Colonic mucosa (tissue), 4 donors: ENCODE measurements at regions of chr5 and their contacts with region 1.

Region 1: GRCh38 chr5:131382407-131383395 is 118.8 kb downstream of the CDC42SE2 start:
- DNase-seq: peak; percentile 40
- H3K4me3 ChIP-seq: no peak overlapping the region
- H3K27ac ChIP-seq: peak overlapping the region; percentile 63
- H3K4me1 ChIP-seq: peaks cover 11% of the 10 kb centered on the region
- H3K27me3 ChIP-seq: no peaks in the 10 kb centered on the region
- CTCF ChIP-seq: peak; percentile 42

Region 2: GRCh38 chr5:131165119-131165727 is 217.5 kb before region 1 on chr5 and contains the start of gene HINT1:
- intact Hi-C with region 1: loop called (anchors 10 kb)
- DNase-seq: peak; percentile 95
- H3K4me3 ChIP-seq: peak within 1 kb of the TSS; percentile 71
- H3K27ac ChIP-seq: peak within 1 kb of the TSS; percentile 99
- H3K4me1 ChIP-seq: no peaks in the 10 kb centered on the region
- H3K27me3 ChIP-seq: no peaks in the 10 kb centered on the region
- CTCF ChIP-seq: no peak
- total RNA-seq, gene HINT1: 269 to 288 TPM

Region 3: GRCh38 chr5:131263648-131264450 is 118.9 kb before region 1 on chr5 and contains the start of gene CDC42SE2:
- intact Hi-C with region 1: loop called (anchors 10 kb)
- DNase-seq: peak; percentile 86
- H3K4me3 ChIP-seq: peak within 1 kb of the TSS; percentile 91
- H3K27ac ChIP-seq: peak within 1 kb of the TSS; percentile 96
- H3K4me1 ChIP-seq: no peaks in the 10 kb centered on the region
- H3K27me3 ChIP-seq: no peaks in the 10 kb centered on the region
- CTCF ChIP-seq: no peak
- total RNA-seq, gene CDC42SE2: 74.2 to 110 TPM

Region 4: DNA sequence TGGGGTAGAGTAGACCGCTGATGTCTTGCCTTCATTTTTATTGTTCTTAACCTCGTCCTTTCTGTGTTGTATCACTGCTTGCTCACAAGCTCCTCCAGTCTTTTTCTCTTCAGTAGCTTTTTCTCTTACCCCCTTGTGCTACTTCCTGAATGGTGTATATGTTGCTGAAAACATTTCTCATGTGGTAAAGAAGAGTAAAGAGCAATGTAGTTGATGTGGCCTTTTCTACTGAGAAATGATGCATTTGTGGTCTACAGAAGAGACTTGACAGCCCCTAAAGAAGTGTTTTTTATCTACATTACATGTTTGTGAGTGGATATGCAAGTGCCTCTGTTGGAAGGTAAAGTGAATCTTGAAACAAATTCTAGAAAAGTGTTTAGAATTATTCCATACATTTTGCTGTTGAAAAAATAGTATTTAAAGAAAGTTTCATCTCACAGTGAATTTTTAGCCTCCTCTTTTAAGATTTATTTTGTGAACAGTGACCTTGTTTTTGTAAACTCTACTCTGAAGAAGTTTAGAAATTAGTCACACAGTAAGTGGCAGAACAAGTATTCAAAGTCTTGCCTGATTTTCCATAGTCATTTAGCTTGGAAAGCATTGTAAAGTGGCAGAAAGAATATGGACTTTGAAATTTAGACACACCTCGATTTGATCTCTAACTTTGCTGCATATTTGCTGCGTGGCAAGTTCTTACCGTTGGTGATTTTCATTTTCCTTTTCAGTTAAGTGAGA is 101.4 kb before region 1 on chr5:
- intact Hi-C with region 1: no loop called
- DNase-seq: no peak
- H3K4me3 ChIP-seq: peak overlapping the region; percentile 0
- H3K27ac ChIP-seq: peak overlapping the region; percentile 79
- H3K4me1 ChIP-seq: peaks cover 17% of the 10 kb centered on the region
- H3K27me3 ChIP-seq: no peaks in the 10 kb centered on the region
- CTCF ChIP-seq: no peak

Region 5: GRCh38 chr5:131324303-131324702 is 58.4 kb before region 1 on chr5:
- intact Hi-C with region 1: no loop called
- DNase-seq: no peak
- H3K4me3 ChIP-seq: no peak overlapping the region
- H3K27ac ChIP-seq: no peak overlapping the region
- H3K4me1 ChIP-seq: peaks cover 7% of the 10 kb centered on the region
- H3K27me3 ChIP-seq: no peaks in the 10 kb centered on the region
- CTCF ChIP-seq: no peak